ENCODE measurements at regions of chr17 and their contacts with region 1.

Region 1: GRCh38 chr17:56977673-56978395 is at the start of gene SCPEP1:
- DNase-seq: peak; percentile 74
- H3K4me3 ChIP-seq: peak within 1 kb of the TSS; percentile 74 to 81 (median 79)
- H3K27ac ChIP-seq: peak within 1 kb of the TSS; percentile 61
- H3K4me1 ChIP-seq: peaks cover 58% of the 10 kb centered on the region
- H3K27me3 ChIP-seq: no peaks in the 10 kb centered on the region
- CTCF ChIP-seq: no peak
- total RNA-seq, gene SCPEP1: 81.8 to 142 TPM

Region 2: GRCh38 chr17:56939901-56940343 is 37.9 kb before region 1 on chr17:
- CTCF ChIA-PET with region 1: no interaction called
- dilution Hi-C with region 1: no loop called
- in situ Hi-C with region 1: no loop called
- intact Hi-C with region 1: no loop called
- DNase-seq: peak; percentile 32
- H3K4me3 ChIP-seq: no peak overlapping the region
- H3K27ac ChIP-seq: no peak overlapping the region
- H3K4me1 ChIP-seq: peaks cover 19% of the 10 kb centered on the region
- H3K27me3 ChIP-seq: no peaks in the 10 kb centered on the region
- CTCF ChIP-seq: peak; percentile 60 to 71

Region 3: GRCh38 chr17:56966338-56966737 is 11.5 kb before region 1 on chr17:
- CTCF ChIA-PET with region 1: interaction called, 25 read pairs
- dilution Hi-C with region 1: no loop called
- in situ Hi-C with region 1: no loop called
- intact Hi-C with region 1: no loop called
- DNase-seq: no peak
- H3K4me3 ChIP-seq: no peak overlapping the region
- H3K27ac ChIP-seq: no peak overlapping the region
- H3K4me1 ChIP-seq: no peaks in the 10 kb centered on the region
- H3K27me3 ChIP-seq: no peaks in the 10 kb centered on the region
- CTCF ChIP-seq: no peak

Region 4: GRCh38 chr17:57084802-57085447 is 107.1 kb after region 1 on chr17 and contains the start of gene AKAP1:
- CTCF ChIA-PET with region 1: interaction called, 9 read pairs
- dilution Hi-C with region 1: no loop called
- in situ Hi-C with region 1: no loop called
- intact Hi-C with region 1: loop called (anchors 5 kb)
- DNase-seq: peak; percentile 94
- H3K4me3 ChIP-seq: peak within 1 kb of the TSS; percentile 96 to 98 (median 98)
- H3K27ac ChIP-seq: peak within 1 kb of the TSS; percentile 91
- H3K4me1 ChIP-seq: peaks cover 21% of the 10 kb centered on the region
- H3K27me3 ChIP-seq: no peaks in the 10 kb centered on the region
- CTCF ChIP-seq: peak in 1 of 2 donors; percentile 26
- total RNA-seq, gene AKAP1: 31.3 to 33.7 TPM